ENCODE measurements at regions of chr15 and their contacts with region 1.

Region 1: GRCh38 chr15:84992157-84992944 is 10.7 kb downstream of the PDE8A start:
- DNase-seq: no peak
- ATAC-seq: peak; percentile 46 to 93 (median 84)
- H3K4me3 ChIP-seq: no peak overlapping the region
- H3K27ac ChIP-seq: peak overlapping the region in 4 of 10 donors; percentile 13 to 65 (median 44)
- H3K4me1 ChIP-seq: peaks cover 7 to 69% (median 54%) of the 10 kb centered on the region in 9 donors
- H3K27me3 ChIP-seq: no peaks in the 10 kb centered on the region
- CTCF ChIP-seq: no peak

Region 2: GRCh38 chr15:84969257-84969656 is 23.1 kb before region 1 on chr15:
- intact Hi-C with region 1: loop called in 1 of 10 experiments (anchors 2 kb)
- DNase-seq: no peak
- ATAC-seq: no peak
- H3K4me3 ChIP-seq: no peak overlapping the region
- H3K27ac ChIP-seq: no peak overlapping the region
- H3K4me1 ChIP-seq: peaks cover 0 to 6% (median 0%) of the 10 kb centered on the region in 9 donors
- H3K27me3 ChIP-seq: no peaks in the 10 kb centered on the region
- CTCF ChIP-seq: no peak

Region 3: GRCh38 chr15:85024509-85025214 is 32.3 kb after region 1 on chr15:
- intact Hi-C with region 1: loop called in 1 of 10 experiments (anchors 5 kb)
- DNase-seq: no peak
- ATAC-seq: no peak
- H3K4me3 ChIP-seq: no peak overlapping the region
- H3K27ac ChIP-seq: peak overlapping the region in 2 of 10 donors; percentile 0 to 61
- H3K4me1 ChIP-seq: peaks cover 10 to 75% (median 58%) of the 10 kb centered on the region in 9 donors
- H3K27me3 ChIP-seq: no peaks in the 10 kb centered on the region
- CTCF ChIP-seq: no peak

Region 4: DNA sequence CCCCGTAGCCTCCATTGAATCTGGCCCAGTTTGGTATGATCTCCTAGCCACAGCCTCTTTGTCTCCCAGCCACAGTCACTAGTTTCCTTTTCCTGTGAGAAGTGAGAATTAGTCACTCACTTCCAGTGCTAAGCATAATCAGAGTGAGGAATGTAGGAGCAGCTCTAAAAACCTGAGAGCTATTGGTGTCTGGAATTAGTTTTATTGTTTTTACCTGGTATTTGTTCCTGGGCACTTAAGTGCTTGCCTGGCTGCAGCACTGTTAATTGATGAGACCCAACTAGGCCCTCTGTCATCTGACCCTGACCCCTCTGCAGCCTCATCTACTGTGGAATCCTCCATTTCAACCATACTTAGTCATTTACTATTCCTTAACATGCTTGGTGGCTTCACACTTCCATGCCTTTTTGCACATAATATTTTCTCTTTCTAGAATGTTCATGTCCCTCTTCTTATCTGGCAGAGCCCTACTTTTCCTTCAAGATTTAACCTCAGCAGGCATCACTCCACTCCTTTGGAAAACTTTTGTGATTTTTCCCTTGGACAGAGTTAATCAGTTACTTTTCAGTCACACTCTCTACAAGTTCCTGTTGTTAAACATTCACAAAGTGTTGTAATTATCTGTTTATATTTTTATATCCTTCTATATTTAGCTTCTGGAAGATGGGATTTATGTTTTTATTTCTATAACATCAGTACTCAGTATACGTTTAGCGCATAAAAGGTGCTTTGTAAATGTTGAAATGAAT is 38.1 kb after region 1 on chr15:
- intact Hi-C with region 1: loop called in 1 of 10 experiments (anchors 5 kb)
- DNase-seq: no peak
- ATAC-seq: peak in 4 of 8 donors; percentile 32 to 71 (median 56)
- H3K4me3 ChIP-seq: no peak overlapping the region
- H3K27ac ChIP-seq: peak overlapping the region in 5 of 10 donors; percentile 5 to 67 (median 51)
- H3K4me1 ChIP-seq: peaks cover 14 to 88% (median 79%) of the 10 kb centered on the region in 9 donors
- H3K27me3 ChIP-seq: no peaks in the 10 kb centered on the region
- CTCF ChIP-seq: no peak

Region 5: DNA sequence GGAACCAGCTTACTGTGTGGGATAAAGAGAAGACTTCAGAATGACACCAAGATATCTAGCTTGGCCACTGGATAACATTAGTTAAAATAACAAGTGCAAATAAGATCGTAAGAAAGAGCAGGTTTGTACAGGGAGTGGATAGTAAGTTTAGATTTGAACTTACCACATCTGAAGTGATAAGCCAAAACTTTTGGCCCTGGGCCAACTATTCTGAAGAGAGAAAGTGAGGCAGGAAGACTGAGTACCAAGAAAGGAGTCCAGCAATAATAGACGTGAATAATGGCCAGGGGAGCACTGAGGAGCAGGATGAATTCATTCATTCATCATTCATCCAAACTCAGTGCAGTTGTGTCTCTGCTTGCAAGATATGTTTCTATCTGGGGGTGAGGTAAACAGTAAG is 112.2 kb after region 1 on chr15:
- intact Hi-C with region 1: no loop called
- DNase-seq: no peak
- ATAC-seq: no peak
- H3K4me3 ChIP-seq: no peak overlapping the region
- H3K27ac ChIP-seq: no peak overlapping the region
- H3K4me1 ChIP-seq: no peaks in the 10 kb centered on the region
- H3K27me3 ChIP-seq: no peaks in the 10 kb centered on the region
- CTCF ChIP-seq: no peak